ENCODE measurements at regions of chr5 and their contacts with region 1.

Region 1: DNA sequence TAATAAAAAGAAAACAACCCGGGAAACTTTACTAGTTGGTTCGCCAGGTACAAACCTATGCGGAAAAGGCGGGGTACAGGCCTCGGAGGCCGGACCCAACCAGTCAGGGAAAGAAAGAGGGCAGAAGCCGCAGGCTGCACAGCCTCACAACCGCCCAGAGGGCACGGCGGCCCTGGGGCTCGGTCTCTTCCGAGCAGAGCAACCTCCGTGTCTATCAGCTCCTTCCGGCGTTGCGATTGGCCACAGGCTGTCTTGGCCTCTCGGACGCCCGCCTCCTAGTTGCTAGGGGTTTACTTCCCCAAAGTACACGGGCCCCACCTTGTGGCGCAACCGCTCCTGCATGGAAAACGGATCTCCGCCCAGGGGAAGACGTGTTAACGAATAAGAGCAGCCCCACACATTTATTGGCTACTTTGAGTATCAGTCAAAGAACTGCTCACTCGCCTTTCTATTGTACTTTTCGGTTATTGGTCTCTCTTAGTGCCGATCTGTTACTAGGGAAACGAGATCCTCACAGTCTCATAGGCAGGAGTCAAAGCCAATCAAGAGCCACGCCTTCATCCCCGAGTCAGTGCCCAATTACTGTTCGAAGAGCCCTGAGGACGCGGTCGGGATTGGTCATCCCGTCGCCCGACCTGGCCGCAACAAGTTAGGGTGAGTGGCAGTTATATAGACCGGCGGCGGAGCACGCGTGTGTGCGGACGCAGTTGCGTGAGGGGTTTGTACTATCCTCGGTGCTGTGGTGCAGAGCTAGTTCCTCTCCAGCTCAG is at the start of gene G3BP1:
- DNase-seq: peak; percentile 86 to 100 (median 99)
- ATAC-seq: peak; percentile 86
- H3K4me3 ChIP-seq: peak within 1 kb of the TSS; percentile 93
- H3K4me3 Mint-ChIP-seq: peak within 1 kb of the TSS in 7 of 10 donors; percentile 89 to 97 (median 94)
- H3K27ac ChIP-seq: peak within 1 kb of the TSS; percentile 87
- H3K27ac Mint-ChIP-seq: peak within 1 kb of the TSS in 5 of 9 donors; percentile 79 to 94 (median 87)
- H3K4me1 ChIP-seq: peaks cover 31 to 39% of the 10 kb centered on the region in 2 donors
- H3K4me1 Mint-ChIP-seq: peaks cover 24 to 55% (median 43%) of the 10 kb centered on the region in 7 donors
- H3K27me3 ChIP-seq: no peaks in the 10 kb centered on the region
- H3K27me3 Mint-ChIP-seq: no peaks in the 10 kb centered on the region
- total RNA-seq, gene G3BP1: 86.1 to 244 (median 167) TPM

Region 2: DNA sequence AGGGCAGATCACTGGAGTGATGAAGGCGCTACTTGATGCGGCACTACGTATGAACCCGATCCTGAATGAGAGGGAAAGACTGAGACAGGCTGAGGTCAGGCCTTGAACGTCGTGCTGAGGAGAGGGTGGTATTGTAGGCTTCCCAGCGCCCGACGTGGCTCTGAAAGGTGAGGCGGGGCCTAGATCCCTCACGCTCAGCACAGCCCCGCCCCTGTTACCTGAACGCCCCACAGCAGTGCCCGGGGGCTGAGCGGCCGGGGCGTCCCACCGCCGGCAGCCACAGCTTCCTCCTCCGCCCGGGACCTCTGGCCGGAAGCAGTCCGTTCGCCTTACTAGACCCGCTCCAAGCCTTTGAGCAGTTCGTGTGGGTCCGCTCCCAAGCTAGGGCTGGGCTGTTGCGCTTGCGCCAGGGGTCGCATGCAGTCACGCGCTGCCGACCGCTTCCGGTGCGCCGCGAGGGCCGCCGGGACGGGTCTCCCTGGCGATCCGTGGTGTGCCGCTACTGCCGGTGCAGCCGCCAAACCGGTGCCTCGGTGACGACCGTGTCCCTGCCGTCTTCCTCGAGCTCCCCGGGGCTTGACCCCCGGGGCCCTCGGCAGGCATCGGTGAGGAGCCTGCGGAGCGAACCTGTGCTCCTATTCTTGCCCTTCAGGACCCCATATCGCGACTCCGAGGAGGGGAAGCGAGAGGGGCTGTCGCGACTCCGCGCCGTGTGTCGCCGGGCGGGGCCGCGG is 1771.0 kb before region 1 on chr5 and contains the starts of genes HMGXB3 and TIGD6:
- CTCF ChIA-PET with region 1: no interaction called
- POLR2A ChIA-PET with region 1: no interaction called
- intact Hi-C with region 1: loop called (anchors 1 to 2 kb)
- DNase-seq: peak; percentile 64 to 87 (median 74)
- ATAC-seq: peak; percentile 83
- H3K4me3 ChIP-seq: peak within 1 kb of the TSS; percentile 76
- H3K4me3 Mint-ChIP-seq: peak within 1 kb of the TSS; percentile 86 to 99 (median 93)
- H3K27ac ChIP-seq: peak within 1 kb of the TSS; percentile 80
- H3K27ac Mint-ChIP-seq: peak within 1 kb of the TSS; percentile 75 to 98 (median 94)
- H3K4me1 ChIP-seq: peaks cover 18 to 23% of the 10 kb centered on the region in 2 donors
- H3K4me1 Mint-ChIP-seq: peaks cover 33 to 55% (median 46%) of the 10 kb centered on the region in 7 donors
- H3K27me3 ChIP-seq: no peaks in the 10 kb centered on the region
- H3K27me3 Mint-ChIP-seq: no peaks in the 10 kb centered on the region
- total RNA-seq, gene HMGXB3: 27.2 to 40.6 (median 34.5) TPM
- total RNA-seq, gene TIGD6: 2.3 to 7.4 (median 2.8) TPM

Region 3: GRCh38 chr5:150758531-150759333 is 1012.7 kb before region 1 on chr5 and contains the start of gene DCTN4:
- CTCF ChIA-PET with region 1: no interaction called
- POLR2A ChIA-PET with region 1: interaction called, 3 read pairs
- intact Hi-C with region 1: loop called in 1 of 2 experiments (anchors 2 kb)
- DNase-seq: peak; percentile 84 to 96 (median 94)
- ATAC-seq: peak; percentile 95
- H3K4me3 ChIP-seq: peak within 1 kb of the TSS; percentile 86
- H3K4me3 Mint-ChIP-seq: peak within 1 kb of the TSS in 3 of 10 donors; percentile 23 to 46 (median 36)
- H3K27ac ChIP-seq: peak within 1 kb of the TSS; percentile 96
- H3K27ac Mint-ChIP-seq: peak within 1 kb of the TSS in 1 of 9 donors; percentile 62
- H3K4me1 ChIP-seq: peaks cover 5 to 16% of the 10 kb centered on the region in 2 donors
- H3K4me1 Mint-ChIP-seq: peaks cover 22 to 54% (median 36%) of the 10 kb centered on the region in 7 donors
- H3K27me3 ChIP-seq: no peaks in the 10 kb centered on the region
- H3K27me3 Mint-ChIP-seq: peaks cover 0 to 5% (median 0%) of the 10 kb centered on the region in 5 donors
- total RNA-seq, gene DCTN4: 42.4 to 88.2 (median 46.9) TPM

Region 4: GRCh38 chr5:151252762-151253604 is 518.5 kb before region 1 on chr5 and contains the start of gene GM2A:
- CTCF ChIA-PET with region 1: no interaction called
- POLR2A ChIA-PET with region 1: interaction called, 5 read pairs
- intact Hi-C with region 1: loop called (anchors 1 kb)
- DNase-seq: peak; percentile 91 to 98 (median 96)
- ATAC-seq: peak; percentile 97
- H3K4me3 ChIP-seq: peak within 1 kb of the TSS; percentile 93
- H3K4me3 Mint-ChIP-seq: peak within 1 kb of the TSS; percentile 82 to 97 (median 94)
- H3K27ac ChIP-seq: peak within 1 kb of the TSS; percentile 78
- H3K27ac Mint-ChIP-seq: peak within 1 kb of the TSS; percentile 74 to 96 (median 95)
- H3K4me1 ChIP-seq: peaks cover 11 to 21% of the 10 kb centered on the region in 2 donors
- H3K4me1 Mint-ChIP-seq: peaks cover 30 to 50% (median 47%) of the 10 kb centered on the region in 7 donors
- H3K27me3 ChIP-seq: no peaks in the 10 kb centered on the region
- H3K27me3 Mint-ChIP-seq: no peaks in the 10 kb centered on the region
- total RNA-seq, gene GM2A: 11.1 to 45.6 (median 16.9) TPM

Region 5: GRCh38 chr5:151659001-151659754 is 112.3 kb before region 1 on chr5:
- CTCF ChIA-PET with region 1: interaction called, 6 read pairs
- POLR2A ChIA-PET with region 1: interaction called, 8 read pairs
- intact Hi-C with region 1: loop called (anchors 1 kb)
- DNase-seq: peak; percentile 40 to 84 (median 74)
- ATAC-seq: peak; percentile 95
- H3K4me3 ChIP-seq: no peak overlapping the region
- H3K4me3 Mint-ChIP-seq: no peak overlapping the region
- H3K27ac ChIP-seq: no peak overlapping the region
- H3K27ac Mint-ChIP-seq: no peak overlapping the region
- H3K4me1 ChIP-seq: no peaks in the 10 kb centered on the region
- H3K4me1 Mint-ChIP-seq: peaks cover 9 to 19% (median 14%) of the 10 kb centered on the region in 7 donors
- H3K27me3 ChIP-seq: no peaks in the 10 kb centered on the region
- H3K27me3 Mint-ChIP-seq: peaks cover 0 to 19% (median 6%) of the 10 kb centered on the region in 5 donors

Region 6: GRCh38 chr5:152142840-152143469 is 371.5 kb after region 1 on chr5:
- CTCF ChIA-PET with region 1: no interaction called
- POLR2A ChIA-PET with region 1: interaction called, 3 read pairs
- intact Hi-C with region 1: loop called in 1 of 2 experiments (anchors 1 kb)
- DNase-seq: peak; percentile 21 to 56 (median 44)
- ATAC-seq: peak; percentile 73
- H3K4me3 ChIP-seq: no peak overlapping the region
- H3K4me3 Mint-ChIP-seq: no peak overlapping the region
- H3K27ac ChIP-seq: no peak overlapping the region
- H3K27ac Mint-ChIP-seq: no peak overlapping the region
- H3K4me1 ChIP-seq: no peaks in the 10 kb centered on the region
- H3K4me1 Mint-ChIP-seq: peaks cover 0 to 2% (median 0%) of the 10 kb centered on the region in 7 donors
- H3K27me3 ChIP-seq: no peaks in the 10 kb centered on the region
- H3K27me3 Mint-ChIP-seq: peaks cover 0 to 7% (median 0%) of the 10 kb centered on the region in 5 donors

Measured in naive thymus-derived CD4-positive, alpha-beta T cell (primary cell).